B cell (primary cell): ENCODE measurements at regions of chr6 and their contacts with region 1.

Region 1: DNA sequence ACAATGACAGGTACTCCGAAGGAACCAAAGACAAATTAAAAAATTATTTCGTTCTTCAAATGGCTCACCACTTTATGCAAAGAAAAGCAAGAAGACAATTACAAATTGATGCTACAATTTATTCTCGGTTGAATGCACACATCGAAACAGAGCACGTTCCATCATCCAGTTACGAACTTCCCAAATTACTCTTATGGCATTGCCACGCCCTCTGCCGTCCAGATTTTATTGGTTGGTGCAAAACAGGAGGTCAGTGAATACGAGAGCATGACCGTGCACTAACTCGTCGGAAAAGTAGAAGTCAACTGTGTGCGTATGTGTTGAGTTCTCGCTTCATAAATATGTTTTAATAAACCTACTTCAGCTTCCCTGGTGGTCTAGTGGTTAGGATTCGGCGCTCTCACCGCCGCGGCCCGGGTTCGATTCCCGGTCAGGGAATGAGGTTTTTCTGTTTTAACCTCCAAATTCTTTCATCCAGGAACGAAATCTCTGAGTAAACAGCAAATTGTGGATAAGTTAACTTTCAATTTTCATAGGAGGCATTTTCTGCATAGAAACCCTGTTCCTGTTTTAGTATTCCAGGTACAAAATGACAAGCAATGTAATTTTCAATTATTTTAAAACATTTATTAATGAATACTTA is 23.2 kb downstream of the ZNF311 start:
- DNase-seq: peak; percentile 91
- ATAC-seq: peak; percentile 70
- H3K4me3 ChIP-seq: peak overlapping the region; percentile 67 to 97 (median 75)
- H3K4me3 Mint-ChIP-seq: peak overlapping the region; percentile 93
- H3K27ac ChIP-seq: no peak overlapping the region
- H3K27ac Mint-ChIP-seq: peak overlapping the region; percentile 96
- H3K4me1 ChIP-seq: peaks cover 36 to 37% of the 10 kb centered on the region in 2 donors
- H3K4me1 Mint-ChIP-seq: peaks cover 55% of the 10 kb centered on the region
- H3K27me3 ChIP-seq: peaks cover 0 to 28% (median 14%) of the 10 kb centered on the region in 4 experiments
- H3K27me3 Mint-ChIP-seq: peaks cover 28% of the 10 kb centered on the region
- CTCF ChIP-seq: no peak

Region 2: GRCh38 chr6:27687154-27688013 is 1294.6 kb before region 1 on chr6:
- CTCF ChIA-PET with region 1: interaction called, 3 read pairs
- POLR2A ChIA-PET with region 1: no interaction called
- intact Hi-C with region 1: loop called (anchors 5 kb)
- DNase-seq: peak; percentile 87
- ATAC-seq: peak; percentile 73
- H3K4me3 ChIP-seq: peak overlapping the region; percentile 27 to 99 (median 77)
- H3K4me3 Mint-ChIP-seq: peak overlapping the region; percentile 93
- H3K27ac ChIP-seq: peak overlapping the region in 1 of 2 donors; percentile 32
- H3K27ac Mint-ChIP-seq: peak overlapping the region; percentile 91
- H3K4me1 ChIP-seq: peaks cover 7 to 15% of the 10 kb centered on the region in 2 donors
- H3K4me1 Mint-ChIP-seq: peaks cover 16% of the 10 kb centered on the region
- H3K27me3 ChIP-seq: peaks cover 0 to 8% (median 2%) of the 10 kb centered on the region in 4 experiments
- H3K27me3 Mint-ChIP-seq: peaks cover 4% of the 10 kb centered on the region
- CTCF ChIP-seq: peak; percentile 69

Region 3: GRCh38 chr6:28863604-28864320 is 118.2 kb before region 1 on chr6:
- CTCF ChIA-PET with region 1: interaction called, 7 read pairs
- POLR2A ChIA-PET with region 1: no interaction called
- intact Hi-C with region 1: loop called (anchors 1 kb)
- DNase-seq: peak; percentile 88
- ATAC-seq: peak; percentile 26
- H3K4me3 ChIP-seq: peak overlapping the region; percentile 54 to 78 (median 75)
- H3K4me3 Mint-ChIP-seq: peak overlapping the region; percentile 83
- H3K27ac ChIP-seq: no peak overlapping the region
- H3K27ac Mint-ChIP-seq: peak overlapping the region; percentile 94
- H3K4me1 ChIP-seq: peaks cover 14 to 24% of the 10 kb centered on the region in 2 donors
- H3K4me1 Mint-ChIP-seq: peaks cover 28% of the 10 kb centered on the region
- H3K27me3 ChIP-seq: peaks cover 0 to 4% (median 0%) of the 10 kb centered on the region in 4 experiments
- H3K27me3 Mint-ChIP-seq: peaks cover 10% of the 10 kb centered on the region
- CTCF ChIP-seq: no peak

Region 4: GRCh38 chr6:28895134-28895812 is 86.7 kb before region 1 on chr6:
- CTCF ChIA-PET with region 1: interaction called, 7 read pairs
- POLR2A ChIA-PET with region 1: interaction called, 4 read pairs
- intact Hi-C with region 1: loop called (anchors 1 kb)
- DNase-seq: peak; percentile 96
- ATAC-seq: peak; percentile 58
- H3K4me3 ChIP-seq: peak overlapping the region; percentile 73 to 86 (median 83)
- H3K4me3 Mint-ChIP-seq: peak overlapping the region; percentile 99
- H3K27ac ChIP-seq: peak overlapping the region; percentile 97
- H3K27ac Mint-ChIP-seq: peak overlapping the region; percentile 100
- H3K4me1 ChIP-seq: peaks cover 7 to 12% of the 10 kb centered on the region in 2 donors
- H3K4me1 Mint-ChIP-seq: peaks cover 21% of the 10 kb centered on the region
- H3K27me3 ChIP-seq: no peaks in the 10 kb centered on the region
- H3K27me3 Mint-ChIP-seq: peaks cover 4% of the 10 kb centered on the region
- CTCF ChIP-seq: no peak

Region 5: DNA sequence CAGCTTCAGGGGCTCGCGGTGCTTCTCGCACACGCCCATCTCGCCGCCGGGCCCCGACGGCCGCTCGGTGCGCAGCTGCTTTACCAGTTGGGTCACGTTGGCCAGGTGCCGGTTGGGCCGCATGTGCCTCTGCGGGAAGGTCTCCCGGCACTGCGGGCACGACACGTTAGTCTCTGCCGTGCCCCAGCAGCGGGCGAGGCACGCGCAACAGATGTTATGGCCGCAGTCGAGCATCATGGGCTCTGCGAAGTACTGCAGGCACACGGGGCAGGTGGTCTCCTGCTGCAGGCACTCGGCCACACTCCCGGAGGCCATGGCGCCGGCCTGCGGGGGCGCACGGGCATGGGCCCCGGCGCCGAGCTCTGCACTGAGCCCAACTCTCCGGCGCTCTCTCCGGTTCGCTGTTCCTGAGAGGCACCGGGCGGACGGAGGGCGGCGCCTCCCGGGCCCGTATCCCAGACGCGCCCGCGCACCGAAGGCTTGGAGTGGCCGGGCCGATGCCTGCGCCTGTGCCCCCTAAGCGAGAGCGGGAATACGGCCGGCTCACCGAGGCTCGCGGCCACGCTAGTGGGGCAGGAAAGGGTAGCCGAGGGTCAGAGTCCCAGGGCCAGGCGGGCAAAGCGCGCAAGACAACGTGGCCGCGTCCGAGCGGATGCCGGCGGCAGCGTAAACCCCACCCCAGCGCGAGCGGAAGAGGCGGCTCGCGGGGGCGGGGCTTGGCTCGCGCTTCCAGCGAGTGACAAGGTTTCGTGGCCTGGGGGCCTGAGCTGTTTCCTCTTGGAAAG is 58.4 kb before region 1 on chr6 and contains the start of gene TRIM27:
- CTCF ChIA-PET with region 1: no interaction called
- POLR2A ChIA-PET with region 1: interaction called, 9 read pairs
- intact Hi-C with region 1: loop called (anchors 1 kb)
- DNase-seq: peak; percentile 90
- ATAC-seq: peak; percentile 86
- H3K4me3 ChIP-seq: peak within 1 kb of the TSS; percentile 71 to 97 (median 92)
- H3K4me3 Mint-ChIP-seq: peak within 1 kb of the TSS; percentile 90
- H3K27ac ChIP-seq: peak within 1 kb of the TSS; percentile 81 to 83
- H3K27ac Mint-ChIP-seq: peak within 1 kb of the TSS; percentile 97
- H3K4me1 ChIP-seq: peaks cover 30% of the 10 kb centered on the region in 2 donors
- H3K4me1 Mint-ChIP-seq: peaks cover 34% of the 10 kb centered on the region
- H3K27me3 ChIP-seq: no peaks in the 10 kb centered on the region
- H3K27me3 Mint-ChIP-seq: no peaks in the 10 kb centered on the region
- CTCF ChIP-seq: peak; percentile 21
- total RNA-seq, gene TRIM27: 66.7 and 70.0 TPM in 2 replicates

Region 6: DNA sequence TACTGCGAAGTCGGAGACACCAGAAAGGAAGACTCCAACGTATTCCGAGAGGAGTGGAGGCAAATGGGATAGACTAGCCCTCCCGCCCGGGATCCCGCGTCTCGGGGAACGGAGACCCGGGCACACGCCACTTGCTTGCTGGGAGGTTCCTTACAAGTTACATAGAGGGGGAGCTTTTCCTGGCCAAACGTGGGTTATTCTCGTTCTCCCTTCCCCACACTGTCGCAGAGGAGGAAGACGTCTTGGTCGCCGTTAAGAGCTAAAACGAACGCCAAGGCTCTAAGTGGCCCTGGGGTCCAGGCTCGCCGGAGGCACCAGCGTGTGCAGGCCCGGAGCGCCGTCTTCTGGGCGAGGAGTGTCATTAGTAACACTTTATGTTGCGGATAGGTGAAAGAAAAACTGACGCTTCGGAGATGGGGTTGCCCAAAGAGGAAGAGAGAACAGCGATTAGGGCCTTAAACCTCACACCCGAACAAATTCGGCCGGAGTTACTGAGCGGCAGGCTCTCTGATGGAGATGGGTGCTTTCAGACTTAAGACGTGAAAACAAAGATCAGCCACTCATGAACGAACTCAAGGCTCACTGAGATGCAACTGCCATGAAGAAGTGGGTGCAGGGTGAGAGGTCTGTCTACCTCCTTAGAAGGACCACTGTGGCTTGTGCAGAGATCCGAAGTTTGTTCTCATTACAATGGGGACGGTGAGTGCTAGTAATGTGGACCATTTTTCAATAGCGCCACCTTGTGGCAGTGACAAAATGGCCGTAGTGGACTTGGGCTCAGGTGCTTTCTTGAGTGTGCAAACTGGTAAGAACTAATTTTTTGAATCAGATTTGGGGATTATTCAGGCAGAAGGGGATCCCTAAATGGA is 34.8 kb after region 1 on chr6:
- CTCF ChIA-PET with region 1: interaction called, 8 read pairs
- POLR2A ChIA-PET with region 1: no interaction called
- intact Hi-C with region 1: loop called (anchors 2 kb)
- DNase-seq: peak; percentile 90
- ATAC-seq: peak; percentile 84
- H3K4me3 ChIP-seq: peak overlapping the region; percentile 37 to 67 (median 57)
- H3K4me3 Mint-ChIP-seq: peak overlapping the region; percentile 85
- H3K27ac ChIP-seq: no peak overlapping the region
- H3K27ac Mint-ChIP-seq: peak overlapping the region; percentile 47
- H3K4me1 ChIP-seq: peaks cover 11 to 16% of the 10 kb centered on the region in 2 donors
- H3K4me1 Mint-ChIP-seq: peaks cover 19% of the 10 kb centered on the region
- H3K27me3 ChIP-seq: peaks cover 0 to 48% (median 32%) of the 10 kb centered on the region in 4 experiments
- H3K27me3 Mint-ChIP-seq: peaks cover 47% of the 10 kb centered on the region
- CTCF ChIP-seq: peak; percentile 91

Region 7: GRCh38 chr6:29082457-29082856 is 100.5 kb after region 1 on chr6:
- CTCF ChIA-PET with region 1: no interaction called
- POLR2A ChIA-PET with region 1: no interaction called
- intact Hi-C with region 1: no loop called
- DNase-seq: no peak
- ATAC-seq: no peak
- H3K4me3 ChIP-seq: no peak overlapping the region
- H3K4me3 Mint-ChIP-seq: no peak overlapping the region
- H3K27ac ChIP-seq: no peak overlapping the region
- H3K27ac Mint-ChIP-seq: no peak overlapping the region
- H3K4me1 ChIP-seq: no peaks in the 10 kb centered on the region
- H3K4me1 Mint-ChIP-seq: no peaks in the 10 kb centered on the region
- H3K27me3 ChIP-seq: peaks cover 0 to 4% (median 2%) of the 10 kb centered on the region in 4 experiments
- H3K27me3 Mint-ChIP-seq: peaks cover 27% of the 10 kb centered on the region
- CTCF ChIP-seq: no peak

Region 8: GRCh38 chr6:29345380-29345779 is 363.4 kb after region 1 on chr6:
- CTCF ChIA-PET with region 1: no interaction called
- POLR2A ChIA-PET with region 1: no interaction called
- intact Hi-C with region 1: no loop called
- DNase-seq: no peak
- ATAC-seq: no peak
- H3K4me3 ChIP-seq: no peak overlapping the region
- H3K4me3 Mint-ChIP-seq: no peak overlapping the region
- H3K27ac ChIP-seq: no peak overlapping the region
- H3K27ac Mint-ChIP-seq: no peak overlapping the region
- H3K4me1 ChIP-seq: no peaks in the 10 kb centered on the region
- H3K4me1 Mint-ChIP-seq: no peaks in the 10 kb centered on the region
- H3K27me3 ChIP-seq: no peaks in the 10 kb centered on the region
- H3K27me3 Mint-ChIP-seq: peaks cover 11% of the 10 kb centered on the region
- CTCF ChIP-seq: no peak